Heart right ventricle (tissue), 16 donors: ENCODE measurements at regions of chr17 and their contacts with region 1.

Region 1: GRCh38 chr17:30344283-30345088 is 10.6 kb upstream of the TMIGD1 start:
- DNase-seq: peak; percentile 41 to 56
- ATAC-seq: peak; percentile 64 to 92 (median 80)
- H3K4me3 ChIP-seq: no peak overlapping the region
- H3K27ac ChIP-seq: peak overlapping the region in 9 of 10 donors; percentile 17 to 90 (median 76)
- H3K4me1 ChIP-seq: peaks cover 12 to 72% (median 52%) of the 10 kb centered on the region in 9 donors
- H3K27me3 ChIP-seq: no peaks in the 10 kb centered on the region
- CTCF ChIP-seq: no peak

Region 2: DNA sequence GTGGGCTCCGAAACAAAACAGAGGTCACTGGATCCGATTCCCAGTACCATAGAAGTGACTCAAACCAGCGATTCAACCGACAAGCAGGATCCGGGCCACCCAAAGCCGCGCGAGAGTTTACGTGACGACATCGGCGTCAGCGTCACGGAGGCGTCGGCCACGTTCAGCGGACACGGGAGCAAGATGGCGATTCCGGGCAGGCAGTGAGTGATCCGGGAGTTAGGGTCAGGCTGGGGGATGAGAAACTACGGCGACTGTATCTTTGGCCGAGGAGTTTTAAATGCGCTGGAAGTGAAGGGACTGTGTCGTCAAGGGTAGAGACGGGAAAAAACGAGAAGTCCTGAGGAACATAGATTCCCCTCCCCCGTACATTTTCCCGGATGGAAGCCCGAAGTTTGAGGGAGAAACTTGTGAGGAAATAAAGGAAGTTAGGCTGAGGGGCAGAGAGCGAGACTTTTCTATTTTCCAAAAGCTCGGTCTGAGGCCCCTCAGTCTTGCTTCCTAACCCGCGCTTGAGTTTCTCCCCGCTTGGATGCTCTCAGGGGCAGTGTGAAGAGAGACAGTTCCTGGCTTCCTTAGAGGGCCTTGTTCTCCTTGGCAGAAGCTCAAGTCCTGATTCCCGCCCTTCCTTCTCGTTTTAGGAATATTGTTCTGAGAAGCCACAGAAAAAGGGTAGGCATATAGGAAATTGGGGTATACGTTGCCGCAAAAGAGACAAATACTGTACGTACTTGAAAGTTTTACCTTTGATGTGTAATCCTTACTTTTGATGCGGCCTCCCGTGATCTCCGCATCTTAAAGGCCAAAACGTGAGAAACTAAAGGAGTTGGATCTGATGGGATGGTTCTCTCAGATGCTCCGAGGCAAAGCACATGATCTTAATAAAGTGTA is 227.6 kb before region 1 on chr17 and contains the start of gene NSRP1:
- intact Hi-C with region 1: loop called in 3 of 10 experiments (anchors 5 to 10 kb)
- DNase-seq: peak; percentile 96
- ATAC-seq: peak; percentile 96 to 100 (median 99)
- H3K4me3 ChIP-seq: peak within 1 kb of the TSS; percentile 60 to 85 (median 71)
- H3K27ac ChIP-seq: peak within 1 kb of the TSS; percentile 88 to 98 (median 94)
- H3K4me1 ChIP-seq: peaks cover 3 to 48% (median 29%) of the 10 kb centered on the region in 9 donors
- H3K27me3 ChIP-seq: no peaks in the 10 kb centered on the region
- CTCF ChIP-seq: no peak
- total RNA-seq, gene NSRP1: 22.2 to 39.1 (median 26.5) TPM

Region 3: GRCh38 chr17:30256756-30257506 is 87.6 kb before region 1 on chr17:
- intact Hi-C with region 1: no loop called
- DNase-seq: no peak
- ATAC-seq: peak in 2 of 8 donors; percentile 25 to 81
- H3K4me3 ChIP-seq: no peak overlapping the region
- H3K27ac ChIP-seq: no peak overlapping the region
- H3K4me1 ChIP-seq: peaks cover 0 to 9% (median 5%) of the 10 kb centered on the region in 9 donors
- H3K27me3 ChIP-seq: no peaks in the 10 kb centered on the region
- CTCF ChIP-seq: no peak

Region 4: DNA sequence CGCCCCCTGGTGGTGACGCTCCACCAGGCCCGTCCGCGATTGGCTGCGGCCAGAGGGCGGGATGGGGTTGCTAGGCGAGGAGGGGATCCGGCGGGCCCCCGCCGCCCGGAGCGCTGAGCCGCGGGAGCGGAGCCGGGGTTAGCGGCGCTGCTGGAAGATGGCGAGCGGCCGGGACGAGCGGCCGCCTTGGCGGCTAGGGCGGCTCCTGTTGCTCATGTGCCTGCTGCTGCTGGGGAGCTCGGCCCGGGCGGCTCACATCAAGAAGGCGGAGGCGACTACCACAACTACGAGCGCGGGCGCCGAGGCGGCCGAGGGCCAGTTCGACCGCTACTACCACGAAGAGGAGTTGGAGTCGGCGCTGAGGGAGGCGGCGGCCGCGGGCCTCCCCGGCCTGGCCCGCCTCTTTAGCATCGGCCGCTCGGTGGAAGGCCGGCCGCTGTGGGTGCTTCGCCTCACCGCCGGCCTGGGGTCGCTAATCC is 34.4 kb after region 1 on chr17 and contains the start of gene CPD:
- intact Hi-C with region 1: loop called in 7 of 10 experiments (anchors 1 to 5 kb)
- DNase-seq: peak; percentile 97 to 98
- ATAC-seq: peak; percentile 98 to 99 (median 99)
- H3K4me3 ChIP-seq: peak within 1 kb of the TSS; percentile 74 to 93 (median 90)
- H3K27ac ChIP-seq: peak within 1 kb of the TSS; percentile 65 to 93 (median 86)
- H3K4me1 ChIP-seq: peaks cover 11 to 65% (median 48%) of the 10 kb centered on the region in 9 donors
- H3K27me3 ChIP-seq: no peaks in the 10 kb centered on the region
- CTCF ChIP-seq: peak in 3 of 9 donors; percentile 22 to 29 (median 28)
- total RNA-seq, gene CPD: 20.4 to 44.0 (median 23.0) TPM

Region 5: GRCh38 chr17:30433514-30433913 is 89.0 kb after region 1 on chr17:
- intact Hi-C with region 1: loop called in 1 of 10 experiments (anchors 10 kb)
- DNase-seq: no peak
- ATAC-seq: peak in 2 of 8 donors; percentile 57 to 67
- H3K4me3 ChIP-seq: no peak overlapping the region
- H3K27ac ChIP-seq: no peak overlapping the region
- H3K4me1 ChIP-seq: peaks cover 0 to 13% (median 0%) of the 10 kb centered on the region in 9 donors
- H3K27me3 ChIP-seq: no peaks in the 10 kb centered on the region
- CTCF ChIP-seq: no peak

Region 6: DNA sequence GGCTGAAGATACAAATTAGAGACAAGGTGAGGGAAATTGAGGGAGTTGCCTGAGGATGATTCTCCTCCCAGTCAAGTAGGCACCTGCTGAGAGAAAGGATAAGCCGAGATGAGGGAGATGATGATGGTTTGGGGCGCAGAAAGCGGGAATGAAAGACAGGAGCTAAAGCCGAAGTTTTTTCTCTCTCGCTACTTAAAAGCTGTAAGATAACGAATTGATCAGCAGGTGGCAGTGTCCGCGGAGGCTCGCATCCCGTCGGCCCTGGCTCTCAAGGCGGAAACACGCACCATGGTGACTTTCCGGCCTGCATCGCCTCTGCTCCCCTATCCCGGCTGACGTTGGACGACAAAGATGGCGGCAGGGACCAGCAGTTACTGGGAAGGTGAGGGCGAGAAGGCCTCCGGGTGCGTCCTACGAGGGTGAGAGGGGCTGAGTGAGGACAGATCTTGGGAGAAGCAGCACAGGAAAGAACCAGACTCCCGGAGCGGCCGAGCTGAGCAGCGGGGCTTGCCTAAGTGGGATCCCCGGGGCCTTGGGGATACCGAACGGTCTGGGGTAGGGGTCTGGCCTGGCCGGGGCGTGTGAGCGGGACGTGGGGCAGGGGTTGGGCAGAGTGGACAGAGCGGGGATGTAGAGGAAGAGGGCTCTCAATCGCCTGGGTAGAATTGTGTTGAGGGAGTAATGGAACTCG is 132.7 kb after region 1 on chr17 and contains the start of gene GOSR1:
- intact Hi-C with region 1: loop called in 2 of 10 experiments (anchors 5 to 10 kb)
- DNase-seq: peak; percentile 90 to 96
- ATAC-seq: peak; percentile 98 to 100 (median 100)
- H3K4me3 ChIP-seq: peak within 1 kb of the TSS; percentile 51 to 92 (median 87)
- H3K27ac ChIP-seq: peak within 1 kb of the TSS; percentile 46 to 98 (median 91)
- H3K4me1 ChIP-seq: peaks cover 0 to 34% (median 26%) of the 10 kb centered on the region in 9 donors
- H3K27me3 ChIP-seq: no peaks in the 10 kb centered on the region
- CTCF ChIP-seq: peak; percentile 70 to 92 (median 79)
- total RNA-seq, gene GOSR1: 29.3 to 43.9 (median 32.8) TPM